SK-N-SH (cell line): ENCODE measurements at regions of chr1 and their contacts with region 1.

Region 1: DNA sequence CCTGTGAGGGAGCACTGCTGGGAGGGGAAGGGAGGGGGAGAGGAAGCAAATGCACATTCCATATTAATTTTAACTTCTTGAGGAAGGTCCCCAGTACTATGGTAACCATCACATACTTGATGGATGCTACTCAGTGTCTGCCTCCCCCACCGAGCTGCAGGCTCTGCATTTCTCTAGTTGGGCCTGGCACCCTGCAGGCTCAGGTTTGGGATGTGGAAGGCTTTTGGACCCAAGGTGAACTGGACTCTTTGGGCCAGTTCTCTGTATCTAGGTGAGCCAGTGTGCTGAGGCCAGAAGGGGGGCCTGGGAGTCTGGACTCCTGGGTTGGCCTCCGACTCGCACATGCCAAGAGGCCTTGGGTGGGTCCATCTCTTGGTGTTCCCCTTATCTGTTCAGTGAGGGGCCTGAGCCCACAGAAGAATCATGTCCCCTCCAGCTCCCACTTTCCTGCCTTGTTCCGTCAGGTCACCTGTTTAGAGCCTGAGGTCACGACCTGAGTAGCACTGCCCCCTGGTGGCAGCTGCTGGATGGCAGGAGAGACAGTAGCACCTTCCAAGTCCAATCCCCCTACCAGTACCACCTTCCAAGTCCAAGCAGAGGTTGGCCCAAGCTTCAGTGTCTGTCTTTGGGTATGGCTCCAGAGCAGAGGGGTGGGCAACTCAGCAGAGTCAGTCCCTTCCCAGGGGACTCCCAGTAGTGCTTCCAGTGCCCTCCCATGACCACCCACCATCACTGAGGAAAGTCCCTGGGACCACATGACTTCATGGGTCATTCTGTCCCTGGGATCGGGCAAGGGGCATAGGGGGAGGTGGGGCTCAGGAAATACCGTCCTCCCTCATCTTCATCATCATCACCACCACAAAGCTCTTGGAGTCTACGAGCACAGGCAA is 241.8 kb downstream of the TRABD2B start:
- DNase-seq: peak; percentile 44
- H3K4me3 ChIP-seq: no peak overlapping the region
- H3K27ac ChIP-seq: no peak overlapping the region
- H3K4me1 ChIP-seq: no peaks in the 10 kb centered on the region
- H3K27me3 ChIP-seq: no peaks in the 10 kb centered on the region
- CTCF ChIP-seq: peak; percentile 63
- EP300 ChIP-seq: no peak
- RAD21 ChIP-seq: peak; percentile 24; the same call in 1 of the 2 replicates

Region 2: GRCh38 chr1:47738560-47739182 is 16.7 kb before region 1 on chr1:
- CTCF ChIA-PET with region 1: interaction called, 19 read pairs
- POLR2A ChIA-PET with region 1: no interaction called
- DNase-seq: peak; percentile 74
- H3K4me3 ChIP-seq: no peak overlapping the region; a peak in 1 of 4 replicates
- H3K27ac ChIP-seq: no peak overlapping the region
- H3K4me1 ChIP-seq: no peaks in the 10 kb centered on the region
- H3K27me3 ChIP-seq: no peaks in the 10 kb centered on the region
- CTCF ChIP-seq: peak; percentile 70
- EP300 ChIP-seq: no peak
- RAD21 ChIP-seq: peak; percentile 89

Region 3: GRCh38 chr1:47934243-47934805 is 179.0 kb after region 1 on chr1:
- CTCF ChIA-PET with region 1: no interaction called
- POLR2A ChIA-PET with region 1: no interaction called
- DNase-seq: peak; percentile 43
- H3K4me3 ChIP-seq: no peak overlapping the region
- H3K27ac ChIP-seq: no peak overlapping the region
- H3K4me1 ChIP-seq: peaks cover 0 to 23% of the 10 kb centered on the region in 2 experiments; a peak in 1 of 4 replicates
- H3K27me3 ChIP-seq: no peaks in the 10 kb centered on the region
- CTCF ChIP-seq: no peak
- EP300 ChIP-seq: no peak
- RAD21 ChIP-seq: no peak